ENCODE measurements at regions of chr9 and their contacts with region 1.

Region 1: GRCh38 chr9:133103183-133103986 is 17.7 kb downstream of the RALGDS start:
- DNase-seq: peak; percentile 50
- H3K4me3 ChIP-seq: no peak overlapping the region
- H3K27ac ChIP-seq: no peak overlapping the region
- H3K4me1 ChIP-seq: no peaks in the 10 kb centered on the region
- H3K27me3 ChIP-seq: no peaks in the 10 kb centered on the region
- CTCF ChIP-seq: peak; percentile 90 to 95
- POLR2A ChIP-seq: no peak

Region 2: GRCh38 chr9:133042676-133043075 is 60.7 kb before region 1 on chr9:
- CTCF ChIA-PET with region 1: no interaction called
- POLR2A ChIA-PET with region 1: no interaction called
- dilution Hi-C with region 1: no loop called
- intact Hi-C with region 1: loop called (anchors 1 kb)
- DNase-seq: no peak
- H3K4me3 ChIP-seq: no peak overlapping the region
- H3K27ac ChIP-seq: no peak overlapping the region
- H3K4me1 ChIP-seq: no peaks in the 10 kb centered on the region
- H3K27me3 ChIP-seq: no peaks in the 10 kb centered on the region
- CTCF ChIP-seq: no peak
- POLR2A ChIP-seq: no peak

Region 3: DNA sequence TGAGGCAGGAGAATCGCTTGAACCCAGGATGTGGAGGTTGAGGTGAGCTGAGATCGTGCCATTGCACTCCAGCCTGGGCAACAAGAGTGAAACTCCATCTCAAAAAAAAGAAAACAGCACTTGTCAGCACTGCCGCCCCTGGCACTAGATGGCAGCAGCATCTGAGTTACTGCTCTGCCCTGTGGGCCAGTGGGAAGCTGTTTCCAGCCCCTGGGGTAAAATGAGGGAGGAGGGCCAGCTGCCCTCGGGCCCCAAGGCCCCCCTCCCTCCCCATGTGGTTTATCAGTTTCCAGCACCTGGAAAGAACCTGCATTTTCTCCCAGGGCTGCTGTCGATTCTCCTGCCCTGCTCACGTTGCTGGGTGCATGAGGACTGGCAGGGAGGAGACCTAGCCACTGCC is 54.8 kb before region 1 on chr9:
- CTCF ChIA-PET with region 1: no interaction called
- POLR2A ChIA-PET with region 1: no interaction called
- dilution Hi-C with region 1: no loop called
- intact Hi-C with region 1: loop called (anchors 1 kb)
- DNase-seq: peak; percentile 12
- H3K4me3 ChIP-seq: no peak overlapping the region
- H3K27ac ChIP-seq: no peak overlapping the region
- H3K4me1 ChIP-seq: no peaks in the 10 kb centered on the region
- H3K27me3 ChIP-seq: no peaks in the 10 kb centered on the region
- CTCF ChIP-seq: peak in 1 of 2 donors; percentile 41
- POLR2A ChIP-seq: no peak

Region 4: GRCh38 chr9:133121198-133121939 is 18.0 kb after region 1 on chr9 and contains the start of gene RALGDS:
- CTCF ChIA-PET with region 1: interaction called, 6 read pairs
- POLR2A ChIA-PET with region 1: no interaction called
- dilution Hi-C with region 1: no loop called
- intact Hi-C with region 1: loop called (anchors 2 kb)
- DNase-seq: peak; percentile 73
- H3K4me3 ChIP-seq: peak within 1 kb of the TSS; percentile 34 to 45 (median 41)
- H3K27ac ChIP-seq: no peak within 1 kb of the TSS
- H3K4me1 ChIP-seq: peaks cover 30% of the 10 kb centered on the region
- H3K27me3 ChIP-seq: no peaks in the 10 kb centered on the region
- CTCF ChIP-seq: no peak
- POLR2A ChIP-seq: no peak
- total RNA-seq, gene RALGDS: 41.4 and 43.1 TPM in 2 replicates

Region 5: DNA sequence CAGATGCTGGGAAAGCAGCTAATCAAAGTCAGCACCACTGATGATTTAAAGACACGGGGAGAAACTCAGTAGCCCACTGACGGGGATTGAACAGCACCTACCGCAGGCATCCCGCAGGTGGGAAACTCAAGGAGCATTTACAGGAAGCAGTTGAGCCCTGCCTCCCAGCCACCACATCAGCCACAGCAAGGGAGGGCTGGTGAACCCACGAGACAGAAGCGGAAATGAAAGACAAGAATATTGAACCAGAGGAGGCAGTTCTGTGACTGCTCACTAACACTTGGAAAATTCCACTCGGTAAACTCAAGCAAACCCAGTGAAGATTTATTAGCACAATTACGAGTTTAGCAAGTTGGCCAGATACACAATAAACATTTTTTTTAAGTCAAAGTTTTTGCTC is 516.4 kb after region 1 on chr9:
- CTCF ChIA-PET with region 1: no interaction called
- POLR2A ChIA-PET with region 1: no interaction called
- dilution Hi-C with region 1: no loop called
- intact Hi-C with region 1: no loop called
- DNase-seq: no peak
- H3K4me3 ChIP-seq: no peak overlapping the region
- H3K27ac ChIP-seq: no peak overlapping the region
- H3K4me1 ChIP-seq: no peaks in the 10 kb centered on the region
- H3K27me3 ChIP-seq: peaks cover 3 to 4% of the 10 kb centered on the region in 2 experiments
- CTCF ChIP-seq: no peak
- POLR2A ChIP-seq: no peak

Measured in endothelial cell of umbilical vein (primary cell).